Activated CD4-positive, alpha-beta memory T cell treated with anti-CD3 and anti-CD28 coated beads, Interleukin-2, amount 10 ng/mL, durations not matched to agents 7 days and 5 days (primary cell): ENCODE measurements at regions of chr2 and their contacts with region 1.

Region 1: DNA sequence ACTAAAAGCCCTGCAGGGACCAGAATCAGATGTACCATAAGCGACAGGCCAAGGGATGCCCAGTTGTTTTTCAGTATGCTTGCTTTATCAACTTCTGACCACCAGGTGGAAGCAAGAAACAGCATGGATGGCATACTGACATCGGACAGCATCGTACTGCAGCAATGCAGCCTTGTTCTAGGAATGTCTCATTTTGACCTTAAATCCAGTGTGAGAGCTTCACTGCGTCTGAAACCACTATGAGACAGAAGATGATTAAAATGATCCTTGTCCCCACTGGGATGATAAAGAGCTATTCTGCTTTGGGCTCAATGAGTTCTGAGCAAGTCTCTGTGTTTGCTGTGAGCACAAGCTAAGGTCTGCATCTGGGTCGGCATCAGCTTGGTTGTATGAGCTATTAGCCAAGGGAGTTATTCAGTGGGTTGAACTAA is 54.3 kb downstream of the CDK15 start:
- DNase-seq: peak; percentile 30
- H3K4me3 Mint-ChIP-seq: no peak overlapping the region
- H3K27ac Mint-ChIP-seq: no peak overlapping the region
- H3K4me1 Mint-ChIP-seq: peaks cover 5% of the 10 kb centered on the region
- H3K27me3 Mint-ChIP-seq: peaks cover 28% of the 10 kb centered on the region

Region 2: DNA sequence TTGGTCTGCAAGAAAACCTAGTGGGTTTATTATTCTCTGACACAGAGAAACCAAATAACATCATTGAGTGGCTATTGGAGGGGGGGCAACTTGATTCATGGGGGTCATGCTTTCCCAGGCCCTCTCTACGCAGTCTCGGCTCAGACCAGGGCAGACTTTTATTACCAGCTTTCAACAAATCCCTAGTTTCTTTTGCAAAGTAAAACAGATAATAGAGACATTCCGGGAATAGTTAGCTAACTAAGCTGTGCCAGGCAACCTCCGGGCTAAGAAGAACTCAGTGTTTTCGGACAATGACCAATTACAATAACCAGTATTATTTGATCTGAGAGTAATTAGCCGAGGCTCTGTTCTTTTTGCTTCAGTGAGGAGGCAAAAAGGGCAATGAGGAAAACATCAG is 11.9 kb after region 1 on chr2:
- CTCF ChIA-PET with region 1: no interaction called
- POLR2A ChIA-PET with region 1: no interaction called
- DNase-seq: no peak
- H3K4me3 Mint-ChIP-seq: no peak overlapping the region
- H3K27ac Mint-ChIP-seq: no peak overlapping the region
- H3K4me1 Mint-ChIP-seq: no peaks in the 10 kb centered on the region
- H3K27me3 Mint-ChIP-seq: peaks cover 18% of the 10 kb centered on the region

Region 3: DNA sequence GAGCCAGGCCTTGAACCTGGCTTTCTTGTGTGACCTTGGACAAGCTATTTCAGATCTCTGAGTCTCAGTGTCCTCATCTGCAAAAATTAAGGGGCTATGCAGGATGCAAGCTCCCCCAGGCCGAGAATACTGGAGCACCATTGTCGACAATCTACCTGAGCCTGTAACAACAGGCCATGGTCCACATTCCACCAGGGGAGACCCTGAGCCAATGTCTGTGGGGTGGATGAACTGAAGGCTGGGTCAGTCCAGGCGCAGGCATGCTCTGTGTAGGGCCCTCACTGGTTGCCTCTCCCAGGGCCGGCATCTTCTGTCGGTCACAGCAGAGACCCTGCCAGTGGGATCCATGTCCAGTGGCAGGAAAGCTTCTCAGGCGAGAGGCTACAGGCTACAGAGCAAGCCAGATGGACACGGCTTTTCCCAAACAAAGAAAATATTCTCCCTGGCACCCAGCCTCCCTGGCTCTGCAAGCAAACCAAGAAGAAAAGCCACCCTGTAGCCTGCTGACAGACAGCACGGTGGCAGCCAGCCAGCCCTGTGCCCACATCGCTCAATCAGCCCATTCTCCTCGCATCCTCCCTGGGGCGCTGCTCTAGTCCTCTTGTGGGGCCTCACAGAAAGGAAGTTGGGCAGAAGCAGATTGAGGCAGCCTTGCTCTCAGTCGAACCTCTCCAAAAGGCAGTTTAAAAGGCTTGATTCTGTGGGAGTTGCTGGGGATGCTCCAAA is 124.3 kb after region 1 on chr2:
- CTCF ChIA-PET with region 1: no interaction called
- POLR2A ChIA-PET with region 1: no interaction called
- DNase-seq: no peak
- H3K4me3 Mint-ChIP-seq: no peak overlapping the region
- H3K27ac Mint-ChIP-seq: no peak overlapping the region
- H3K4me1 Mint-ChIP-seq: no peaks in the 10 kb centered on the region
- H3K27me3 Mint-ChIP-seq: no peaks in the 10 kb centered on the region

Region 4: GRCh38 chr2:202104278-202104870 is 243.7 kb after region 1 on chr2:
- CTCF ChIA-PET with region 1: no interaction called
- POLR2A ChIA-PET with region 1: no interaction called
- DNase-seq: peak; percentile 52
- H3K4me3 Mint-ChIP-seq: no peak overlapping the region
- H3K27ac Mint-ChIP-seq: no peak overlapping the region
- H3K4me1 Mint-ChIP-seq: no peaks in the 10 kb centered on the region
- H3K27me3 Mint-ChIP-seq: peaks cover 11% of the 10 kb centered on the region

Region 5: GRCh38 chr2:202172439-202173211 is 312.0 kb after region 1 on chr2:
- CTCF ChIA-PET with region 1: interaction called, 22 read pairs
- POLR2A ChIA-PET with region 1: no interaction called
- DNase-seq: peak; percentile 22
- H3K4me3 Mint-ChIP-seq: no peak overlapping the region
- H3K27ac Mint-ChIP-seq: peak overlapping the region; percentile 28
- H3K4me1 Mint-ChIP-seq: peaks cover 12% of the 10 kb centered on the region
- H3K27me3 Mint-ChIP-seq: no peaks in the 10 kb centered on the region

Region 6: DNA sequence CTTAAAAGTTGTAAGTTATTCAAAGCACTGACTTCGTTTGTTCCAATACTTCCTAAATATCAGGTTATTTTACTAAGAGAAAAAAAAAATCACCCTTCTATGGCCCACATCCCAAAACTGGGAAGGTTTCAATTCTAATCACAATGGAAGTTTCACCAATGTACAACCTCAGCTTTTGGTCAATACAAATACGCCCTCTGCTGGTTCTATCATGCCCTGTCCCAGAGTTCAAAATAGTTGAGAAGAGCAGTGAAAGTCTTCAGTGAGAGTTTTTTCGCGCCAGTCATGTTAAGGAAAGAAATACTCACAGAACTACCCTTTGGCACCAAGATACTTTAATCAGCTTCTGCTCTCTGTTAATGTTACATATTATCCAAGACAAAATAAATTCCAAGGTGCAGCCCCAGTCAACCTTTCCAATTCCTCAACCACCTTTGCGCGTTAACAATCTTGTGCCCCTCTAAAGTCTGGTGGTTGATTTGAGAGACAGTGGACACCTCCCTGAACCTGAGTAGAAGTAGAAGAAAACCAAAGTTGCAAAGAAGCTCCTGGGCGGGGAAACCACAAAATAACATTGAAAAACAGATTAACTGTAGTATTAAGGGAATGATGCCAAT is 317.8 kb after region 1 on chr2:
- CTCF ChIA-PET with region 1: interaction called, 22 read pairs
- POLR2A ChIA-PET with region 1: interaction called, 3 read pairs
- DNase-seq: peak; percentile 52
- H3K4me3 Mint-ChIP-seq: no peak overlapping the region
- H3K27ac Mint-ChIP-seq: no peak overlapping the region
- H3K4me1 Mint-ChIP-seq: no peaks in the 10 kb centered on the region
- H3K27me3 Mint-ChIP-seq: peaks cover 4% of the 10 kb centered on the region